ENCODE measurements at regions of chr17 and their contacts with region 1.

Region 1: GRCh38 chr17:17496189-17497064 is at the start of gene RASD1:
- DNase-seq: peak in 1 of 2 experiments; percentile 86
- H3K4me3 ChIP-seq: no peak within 1 kb of the TSS; the same call in 1 of the 2 replicates
- H3K27ac ChIP-seq: no peak within 1 kb of the TSS
- H3K4me1 ChIP-seq: no peaks in the 10 kb centered on the region; the same call in 1 of the 2 replicates
- H3K27me3 ChIP-seq: no peaks in the 10 kb centered on the region
- CTCF ChIP-seq: peak; percentile 88
- total RNA-seq, gene RASD1: 1.0 and 1.2 TPM in 2 replicates

Region 2: GRCh38 chr17:17387830-17388441 is 108.5 kb before region 1 on chr17:
- CTCF ChIA-PET with region 1: interaction called, 10 read pairs
- POLR2A ChIA-PET with region 1: interaction called, 3 read pairs
- intact Hi-C with region 1: no loop called
- DNase-seq: peak; percentile 73 to 78
- H3K4me3 ChIP-seq: no peak overlapping the region
- H3K27ac ChIP-seq: peak overlapping the region; percentile 45
- H3K4me1 ChIP-seq: peaks cover 21% of the 10 kb centered on the region
- H3K27me3 ChIP-seq: peaks cover 1% of the 10 kb centered on the region
- CTCF ChIP-seq: peak; percentile 75

Region 3: GRCh38 chr17:17511881-17512858 is 15.7 kb after region 1 on chr17:
- CTCF ChIA-PET with region 1: interaction called, 13 read pairs
- POLR2A ChIA-PET with region 1: interaction called, 3 read pairs
- intact Hi-C with region 1: no loop called
- DNase-seq: peak; percentile 89 to 95
- H3K4me3 ChIP-seq: no peak overlapping the region
- H3K27ac ChIP-seq: no peak overlapping the region
- H3K4me1 ChIP-seq: peaks cover 24% of the 10 kb centered on the region
- H3K27me3 ChIP-seq: no peaks in the 10 kb centered on the region
- CTCF ChIP-seq: no peak

Region 4: GRCh38 chr17:17545031-17545820 is 48.8 kb after region 1 on chr17:
- CTCF ChIA-PET with region 1: no interaction called
- POLR2A ChIA-PET with region 1: no interaction called
- intact Hi-C with region 1: no loop called
- DNase-seq: no peak
- H3K4me3 ChIP-seq: no peak overlapping the region
- H3K27ac ChIP-seq: no peak overlapping the region
- H3K4me1 ChIP-seq: no peaks in the 10 kb centered on the region
- H3K27me3 ChIP-seq: no peaks in the 10 kb centered on the region
- CTCF ChIP-seq: no peak

Region 5: DNA sequence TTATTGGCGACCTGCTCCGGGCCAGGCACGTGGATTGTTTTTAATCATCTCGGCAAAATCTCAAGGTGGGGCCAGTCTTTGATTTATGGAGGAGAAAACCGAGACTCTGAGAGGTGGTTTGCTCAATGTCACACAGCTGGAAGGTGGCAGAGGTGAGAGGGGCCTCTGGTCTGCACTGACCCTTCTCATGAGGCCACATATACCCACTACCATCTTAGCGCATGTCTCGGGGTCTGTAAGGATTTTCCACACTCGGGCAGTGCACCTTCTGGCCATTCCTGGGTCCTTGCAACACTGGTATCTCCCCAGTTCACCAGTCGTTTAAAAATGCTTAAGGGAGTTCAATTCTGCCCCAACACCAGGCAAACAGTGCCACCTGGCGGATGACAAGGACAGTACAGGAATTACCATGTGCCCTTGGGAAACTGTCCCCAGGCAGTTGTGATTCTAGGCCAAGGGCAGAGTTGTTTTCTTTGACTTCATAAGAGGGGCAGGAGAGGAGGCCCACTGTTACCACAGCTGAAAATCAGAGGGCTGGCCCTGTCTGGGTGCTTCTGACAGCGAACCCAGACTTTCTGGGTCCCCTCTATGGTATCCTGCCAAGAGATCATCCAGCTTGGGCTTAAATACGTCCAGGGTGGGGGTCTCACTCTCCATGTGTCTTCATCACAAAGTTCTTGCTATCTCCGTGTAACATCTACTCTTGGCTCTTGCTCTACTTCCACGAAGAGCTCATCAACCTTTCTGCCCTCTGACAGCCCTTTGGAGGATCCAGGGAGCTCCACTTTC is 145.4 kb after region 1 on chr17:
- CTCF ChIA-PET with region 1: interaction called, 3 read pairs
- POLR2A ChIA-PET with region 1: no interaction called
- intact Hi-C with region 1: loop called (anchors 2 kb)
- DNase-seq: peak; percentile 63 to 78
- H3K4me3 ChIP-seq: no peak overlapping the region
- H3K27ac ChIP-seq: no peak overlapping the region
- H3K4me1 ChIP-seq: no peaks in the 10 kb centered on the region; the same call in 1 of the 2 replicates
- H3K27me3 ChIP-seq: 0 out of 2 replicates have a peak, but pooled peaks cover 2% of the 10 kb centered on the region
- CTCF ChIP-seq: peak; percentile 96